IMR-90 (cell line): ENCODE measurements at regions of chr2 and their contacts with region 1.

Region 1: DNA sequence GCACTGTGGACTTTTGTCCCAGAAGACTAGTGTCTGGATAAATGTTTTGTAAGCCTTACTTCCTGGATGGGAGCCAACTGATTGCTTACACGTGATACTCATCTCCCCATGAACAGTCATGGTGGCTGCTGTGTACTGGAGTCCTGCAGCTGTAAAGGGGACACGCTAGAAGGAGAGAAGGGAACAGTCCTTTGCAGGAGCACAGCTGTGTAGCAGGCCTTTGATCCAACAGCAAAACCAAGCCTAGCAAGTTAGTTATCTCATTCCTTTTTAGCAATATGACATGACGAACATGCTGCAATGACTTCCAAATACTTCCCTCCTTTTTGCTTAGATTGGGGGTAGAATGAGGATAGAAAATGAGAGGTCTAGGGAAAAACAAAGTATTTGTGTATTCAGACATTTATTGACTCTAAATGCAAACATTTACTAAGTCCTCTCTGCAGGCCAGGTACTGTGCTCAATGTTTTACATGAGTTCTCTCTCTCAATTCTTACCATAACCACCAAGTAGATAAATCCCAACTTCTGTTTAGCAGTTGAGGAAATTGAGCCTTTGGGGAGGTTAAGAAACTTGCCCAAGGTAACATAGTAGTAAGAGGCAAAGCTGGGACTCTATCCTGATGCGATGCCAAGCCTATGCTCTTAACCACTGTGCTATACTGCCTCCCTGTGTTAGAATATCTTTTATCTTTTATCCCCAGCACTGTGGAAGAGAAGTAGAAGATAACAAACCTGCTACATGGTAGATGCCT is 55.4 kb upstream of the CD28 start:
- DNase-seq: peak; percentile 54
- ATAC-seq: peak; percentile 83
- H3K4me3 ChIP-seq: no peak overlapping the region
- H3K27ac ChIP-seq: no peak overlapping the region
- H3K4me1 ChIP-seq: peaks cover 7% of the 10 kb centered on the region
- H3K27me3 ChIP-seq: no peaks in the 10 kb centered on the region
- CTCF ChIP-seq: peak; percentile 49
- POLR2A ChIP-seq: no peak
- RAD21 ChIP-seq: peak; percentile 74

Region 2: GRCh38 chr2:202941771-202942170 is 709.3 kb before region 1 on chr2:
- CTCF ChIA-PET with region 1: no interaction called
- POLR2A ChIA-PET with region 1: no interaction called
- dilution Hi-C with region 1: no loop called
- in situ Hi-C with region 1: no loop called
- intact Hi-C with region 1: no loop called
- DNase-seq: peak; percentile 83
- ATAC-seq: peak; percentile 56
- H3K4me3 ChIP-seq: no peak overlapping the region
- H3K27ac ChIP-seq: no peak overlapping the region
- H3K4me1 ChIP-seq: no peaks in the 10 kb centered on the region; the same call in 1 of the 2 replicates
- H3K27me3 ChIP-seq: no peaks in the 10 kb centered on the region
- CTCF ChIP-seq: no peak
- POLR2A ChIP-seq: no peak
- RAD21 ChIP-seq: no peak

Region 3: DNA sequence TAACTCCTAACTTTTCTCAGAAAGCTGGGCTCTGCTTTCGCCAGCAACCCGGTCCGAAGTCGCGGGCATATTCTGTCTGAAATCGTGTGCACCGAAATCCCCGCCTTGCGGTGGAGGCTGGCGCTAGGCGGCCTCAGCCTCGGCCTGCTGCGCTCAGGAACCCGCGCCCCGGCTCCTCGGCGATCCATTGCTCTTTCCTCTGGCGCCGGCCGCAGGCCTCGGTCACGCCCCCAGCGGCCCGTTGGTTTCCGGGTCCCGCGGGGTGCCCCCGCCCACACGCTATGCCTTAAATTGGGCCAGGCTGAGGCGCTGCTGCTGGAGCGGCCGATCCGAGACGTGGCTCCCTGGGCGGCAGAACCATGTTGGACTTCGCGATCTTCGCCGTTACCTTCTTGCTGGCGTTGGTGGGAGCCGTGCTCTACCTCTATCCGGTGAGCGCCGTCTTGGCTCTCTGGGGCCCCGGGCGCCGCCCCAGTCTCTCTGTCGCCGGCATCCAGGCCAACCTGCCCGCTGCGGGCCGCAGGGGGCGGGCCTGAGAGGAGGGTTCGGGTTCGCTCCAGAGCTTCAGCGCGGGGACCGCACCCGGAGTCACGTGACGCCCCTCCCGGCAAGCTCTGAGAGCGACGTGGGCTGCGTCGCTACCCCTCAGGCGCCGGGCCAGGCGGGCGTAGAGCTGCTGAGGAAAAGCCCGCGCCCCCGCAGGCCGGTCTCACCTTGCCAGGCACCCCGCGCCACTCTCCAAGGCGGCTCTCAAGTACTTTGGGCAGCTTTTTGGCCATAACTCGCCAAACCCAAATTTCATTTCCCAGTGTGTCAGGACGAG is 412.1 kb before region 1 on chr2 and contains the start of gene CYP20A1:
- CTCF ChIA-PET with region 1: no interaction called
- POLR2A ChIA-PET with region 1: no interaction called
- dilution Hi-C with region 1: no loop called
- in situ Hi-C with region 1: no loop called
- intact Hi-C with region 1: loop called (anchors 10 kb)
- DNase-seq: peak; percentile 94
- ATAC-seq: peak; percentile 97
- H3K4me3 ChIP-seq: peak within 1 kb of the TSS; percentile 64
- H3K27ac ChIP-seq: peak within 1 kb of the TSS; percentile 91
- H3K4me1 ChIP-seq: peaks cover 3% of the 10 kb centered on the region; the same call in 1 of the 2 replicates
- H3K27me3 ChIP-seq: no peaks in the 10 kb centered on the region
- CTCF ChIP-seq: peak; percentile 43
- POLR2A ChIP-seq: peak; percentile 96
- RAD21 ChIP-seq: peak; percentile 35
- total RNA-seq, gene CYP20A1: 16.8 and 26.9 TPM in 2 replicates

Region 4: DNA sequence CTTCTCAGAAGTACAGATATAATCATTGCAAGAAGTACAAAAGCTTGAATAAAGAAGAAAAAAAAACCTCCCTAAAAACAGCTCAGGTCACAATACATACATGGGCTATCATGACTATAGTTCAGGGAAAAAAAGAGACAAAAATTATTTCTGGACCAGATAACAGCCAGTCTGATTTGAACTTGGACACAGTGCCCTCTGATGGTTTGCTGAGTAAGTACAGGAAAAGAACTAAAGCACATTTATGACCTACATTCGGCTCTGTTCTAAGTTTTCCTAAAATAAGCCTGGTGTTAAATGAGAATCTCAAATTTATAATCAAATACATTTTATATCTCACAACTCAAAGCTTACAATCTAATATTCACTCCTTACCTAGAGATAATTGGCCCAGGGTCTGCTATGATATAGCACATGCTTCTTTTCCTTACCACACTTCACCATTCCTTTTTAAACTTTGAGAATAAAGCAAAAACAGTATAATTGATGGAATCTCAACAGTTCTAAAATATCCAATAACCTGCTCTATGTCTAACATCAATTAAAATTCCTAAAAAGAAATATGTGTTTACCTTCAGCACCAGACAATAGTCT is 197.1 kb before region 1 on chr2:
- CTCF ChIA-PET with region 1: no interaction called
- POLR2A ChIA-PET with region 1: no interaction called
- dilution Hi-C with region 1: no loop called
- in situ Hi-C with region 1: no loop called
- intact Hi-C with region 1: loop called (anchors 2 kb)
- DNase-seq: peak; percentile 72
- ATAC-seq: peak; percentile 78
- H3K4me3 ChIP-seq: no peak overlapping the region
- H3K27ac ChIP-seq: no peak overlapping the region
- H3K4me1 ChIP-seq: peaks cover 11% of the 10 kb centered on the region
- H3K27me3 ChIP-seq: no peaks in the 10 kb centered on the region
- CTCF ChIP-seq: peak; percentile 76
- POLR2A ChIP-seq: no peak
- RAD21 ChIP-seq: peak; percentile 78

Region 5: DNA sequence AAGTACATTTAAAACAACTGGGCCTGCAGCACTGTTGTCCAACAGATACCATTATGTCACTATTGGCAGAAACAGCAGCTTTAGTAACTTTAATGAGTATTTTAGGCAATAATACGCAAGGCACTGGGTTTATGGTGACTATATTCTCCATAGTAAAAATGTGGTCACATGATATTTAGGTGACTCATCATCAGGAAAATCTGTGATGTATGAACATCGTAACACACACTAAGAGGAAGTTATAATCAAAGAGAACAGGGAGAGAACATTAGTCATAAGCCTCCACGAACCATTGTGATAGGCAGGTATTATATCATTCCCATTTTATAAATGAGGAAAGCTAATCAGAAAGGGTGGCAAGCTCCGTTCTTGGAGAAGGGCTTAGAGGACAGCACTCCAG is 152.9 kb before region 1 on chr2:
- CTCF ChIA-PET with region 1: no interaction called
- POLR2A ChIA-PET with region 1: interaction called, 11 read pairs
- dilution Hi-C with region 1: no loop called
- in situ Hi-C with region 1: no loop called
- intact Hi-C with region 1: no loop called
- DNase-seq: peak; percentile 89
- ATAC-seq: peak; percentile 88
- H3K4me3 ChIP-seq: no peak overlapping the region
- H3K27ac ChIP-seq: no peak overlapping the region
- H3K4me1 ChIP-seq: peaks cover 1% of the 10 kb centered on the region
- H3K27me3 ChIP-seq: no peaks in the 10 kb centered on the region
- CTCF ChIP-seq: no peak
- POLR2A ChIP-seq: no peak
- RAD21 ChIP-seq: no peak

Region 6: GRCh38 chr2:203535078-203535783 is 115.8 kb before region 1 on chr2 and contains the start of gene RAPH1:
- CTCF ChIA-PET with region 1: no interaction called
- POLR2A ChIA-PET with region 1: no interaction called
- dilution Hi-C with region 1: no loop called
- in situ Hi-C with region 1: no loop called
- intact Hi-C with region 1: loop called (anchors 1 kb)
- DNase-seq: peak; percentile 82
- ATAC-seq: peak; percentile 92
- H3K4me3 ChIP-seq: peak within 1 kb of the TSS; percentile 58
- H3K27ac ChIP-seq: peak within 1 kb of the TSS; percentile 90
- H3K4me1 ChIP-seq: no peaks in the 10 kb centered on the region; the same call in 1 of the 2 replicates
- H3K27me3 ChIP-seq: no peaks in the 10 kb centered on the region
- CTCF ChIP-seq: no peak
- POLR2A ChIP-seq: peak; percentile 83
- RAD21 ChIP-seq: no peak; the same call in 1 of the 2 replicates
- total RNA-seq, gene RAPH1: 13.1 and 15.1 TPM in 2 replicates

Region 7: DNA sequence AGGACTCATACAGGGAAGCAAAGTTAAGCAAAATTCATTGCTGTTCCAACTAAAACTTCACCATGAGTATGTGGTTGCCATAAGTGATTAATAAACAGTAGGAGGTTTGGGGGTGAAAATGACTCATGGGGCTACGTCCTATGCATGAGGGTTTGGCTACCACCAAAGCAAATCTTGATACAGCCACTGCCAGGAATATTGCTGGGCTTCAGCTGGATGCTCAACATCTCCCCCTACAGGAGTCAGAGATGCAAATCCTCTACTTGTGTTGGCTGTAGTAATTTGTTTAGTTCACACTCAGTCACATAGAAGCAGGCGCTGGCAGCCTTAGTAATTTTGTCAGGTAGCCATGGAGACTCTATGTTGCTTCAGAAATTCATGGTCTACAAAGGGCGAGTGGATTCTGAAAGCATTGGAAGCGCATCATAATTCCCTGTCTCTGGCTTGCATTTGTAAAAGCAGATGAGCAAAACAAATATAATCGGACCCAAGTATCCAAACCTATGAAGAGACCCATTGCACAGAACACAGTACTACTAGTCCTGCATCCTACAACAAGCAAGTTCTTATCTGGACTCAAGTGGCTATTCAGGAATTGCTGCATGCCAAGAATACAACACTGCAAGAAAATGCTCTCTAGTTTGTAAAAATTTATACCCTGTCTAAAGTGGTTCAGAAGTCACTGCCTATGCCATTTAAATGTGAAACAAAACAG is 131.4 kb after region 1 on chr2:
- CTCF ChIA-PET with region 1: no interaction called
- POLR2A ChIA-PET with region 1: no interaction called
- dilution Hi-C with region 1: no loop called
- in situ Hi-C with region 1: no loop called
- intact Hi-C with region 1: loop called (anchors 5 kb)
- DNase-seq: peak; percentile 94
- ATAC-seq: peak; percentile 58
- H3K4me3 ChIP-seq: no peak overlapping the region
- H3K27ac ChIP-seq: no peak overlapping the region
- H3K4me1 ChIP-seq: peaks cover 10% of the 10 kb centered on the region
- H3K27me3 ChIP-seq: no peaks in the 10 kb centered on the region
- CTCF ChIP-seq: peak; percentile 83
- POLR2A ChIP-seq: 0 out of 2 replicates have a peak, but pooled peaks have one; percentile 29
- RAD21 ChIP-seq: peak; percentile 87

Region 8: GRCh38 chr2:203909261-203909967 is 258.4 kb after region 1 on chr2:
- CTCF ChIA-PET with region 1: no interaction called
- POLR2A ChIA-PET with region 1: no interaction called
- dilution Hi-C with region 1: no loop called
- in situ Hi-C with region 1: no loop called
- intact Hi-C with region 1: loop called (anchors 5 kb)
- DNase-seq: peak; percentile 80
- ATAC-seq: peak; percentile 94
- H3K4me3 ChIP-seq: peak overlapping the region; percentile 20; the same call in 1 of the 2 replicates
- H3K27ac ChIP-seq: peak overlapping the region; percentile 57; the same call in 1 of the 2 replicates
- H3K4me1 ChIP-seq: peaks cover 3% of the 10 kb centered on the region; the same call in 1 of the 2 replicates
- H3K27me3 ChIP-seq: no peaks in the 10 kb centered on the region; the same call in 1 of the 2 replicates
- CTCF ChIP-seq: peak; percentile 85
- POLR2A ChIP-seq: no peak
- RAD21 ChIP-seq: peak; percentile 85